Cardiac septum (tissue), 1 donor: ENCODE measurements at regions of chr1 and their contacts with region 1.

Region 1: GRCh38 chr1:162391790-162392563 is 10.4 kb downstream of the C1orf226 start:
- DNase-seq: no peak

Region 2: GRCh38 chr1:162056043-162056442 is 335.9 kb before region 1 on chr1:
- intact Hi-C with region 1: loop called (anchors 2 kb)
- DNase-seq: no peak

Region 3: GRCh38 chr1:162319493-162320175 is 72.3 kb before region 1 on chr1:
- intact Hi-C with region 1: no loop called
- DNase-seq: no peak